OCI-LY7 (cell line): ENCODE measurements at regions of chr1 and their contacts with region 1.

Region 1: DNA sequence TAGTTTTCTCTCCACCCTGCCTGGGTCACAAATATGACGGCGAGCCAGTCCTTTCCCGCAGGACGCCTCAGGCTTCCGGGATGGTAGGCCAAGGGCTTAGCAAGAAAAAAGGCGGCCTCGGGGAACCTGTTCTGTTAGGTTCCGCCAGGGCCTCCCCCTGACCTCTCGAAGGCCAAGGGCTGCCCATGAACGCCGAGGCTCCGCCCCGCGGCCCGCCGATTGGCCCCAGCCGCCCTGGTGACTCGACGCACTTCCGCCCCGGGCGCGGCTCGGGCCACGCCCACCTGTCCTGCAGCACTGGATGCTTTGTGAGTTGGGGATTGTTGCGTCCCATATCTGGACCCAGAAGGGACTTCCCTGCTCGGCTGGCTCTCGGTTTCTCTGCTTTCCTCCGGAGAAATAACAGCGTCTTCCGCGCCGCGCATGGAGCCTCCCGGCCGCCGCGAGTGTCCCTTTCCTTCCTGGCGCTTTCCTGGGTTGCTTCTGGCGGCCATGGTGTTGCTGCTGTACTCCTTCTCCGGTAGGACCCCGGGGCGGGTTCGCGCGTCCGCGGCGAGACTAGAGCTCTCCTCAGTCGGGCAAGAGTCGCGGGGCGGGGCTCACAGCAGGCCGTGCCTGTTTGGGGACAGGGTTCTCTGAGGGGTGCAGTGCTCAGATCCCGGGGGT is at the start of gene CD46:
- DNase-seq: peak; percentile 96
- H3K4me3 ChIP-seq: peak within 1 kb of the TSS; percentile 98
- H3K27ac ChIP-seq: peak within 1 kb of the TSS; percentile 100
- H3K4me1 ChIP-seq: peaks cover 74% of the 10 kb centered on the region
- CTCF ChIP-seq: no peak
- total RNA-seq, gene CD46: 74.0 and 83.8 TPM in 2 replicates

Region 2: GRCh38 chr1:207797229-207797961 is 45.5 kb after region 1 on chr1:
- CTCF ChIA-PET with region 1: no interaction called
- POLR2A ChIA-PET with region 1: interaction called, 7 read pairs
- intact Hi-C with region 1: loop called (anchors 2 kb)
- DNase-seq: peak; percentile 78
- H3K4me3 ChIP-seq: no peak overlapping the region
- H3K27ac ChIP-seq: no peak overlapping the region
- H3K4me1 ChIP-seq: no peaks in the 10 kb centered on the region
- CTCF ChIP-seq: peak; percentile 94

Region 3: GRCh38 chr1:207822602-207823451 is 70.9 kb after region 1 on chr1:
- CTCF ChIA-PET with region 1: no interaction called
- POLR2A ChIA-PET with region 1: interaction called, 15 read pairs
- intact Hi-C with region 1: loop called (anchors 1 kb)
- DNase-seq: peak; percentile 91
- H3K4me3 ChIP-seq: peak overlapping the region; percentile 76
- H3K27ac ChIP-seq: peak overlapping the region; percentile 45
- H3K4me1 ChIP-seq: peaks cover 66% of the 10 kb centered on the region
- CTCF ChIP-seq: no peak

Region 4: DNA sequence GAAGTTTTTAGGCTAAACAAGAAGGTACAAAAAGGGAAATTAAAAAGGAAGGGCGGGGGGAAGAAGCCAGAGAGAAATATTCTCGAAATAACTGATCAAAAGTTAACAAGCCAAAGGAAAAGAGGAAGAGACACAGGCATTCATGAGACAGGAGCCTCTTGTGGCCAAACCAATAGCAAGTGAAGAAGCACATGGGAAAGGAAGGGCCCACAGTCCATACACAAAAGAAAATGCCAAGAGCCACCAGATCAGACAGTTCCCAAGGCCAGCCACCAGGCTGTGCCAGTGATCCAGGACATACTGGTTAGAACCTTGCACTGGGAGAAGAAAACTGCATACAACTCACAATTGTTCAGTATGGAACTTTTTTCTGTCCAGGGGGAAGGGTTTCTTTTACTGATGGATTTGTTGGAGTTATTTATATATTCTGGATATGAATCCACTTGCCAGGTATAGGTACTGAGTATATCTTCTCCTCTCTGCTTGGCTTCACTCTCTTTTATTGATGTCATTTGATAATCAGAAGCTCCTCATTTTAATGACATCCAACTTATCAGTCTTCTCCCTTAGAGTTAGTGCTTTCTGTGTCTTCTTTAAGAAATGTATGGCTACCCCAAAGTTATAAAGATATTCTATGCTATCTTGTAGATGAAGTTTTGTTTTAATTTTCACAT is 76.7 kb after region 1 on chr1:
- CTCF ChIA-PET with region 1: no interaction called
- POLR2A ChIA-PET with region 1: interaction called, 15 read pairs
- intact Hi-C with region 1: no loop called
- DNase-seq: peak; percentile 68
- H3K4me3 ChIP-seq: no peak overlapping the region
- H3K27ac ChIP-seq: no peak overlapping the region
- H3K4me1 ChIP-seq: peaks cover 46% of the 10 kb centered on the region
- CTCF ChIP-seq: peak; percentile 77